GM12878 (cell line): ENCODE measurements at regions of chr2 and their contacts with region 1.

Region 1: DNA sequence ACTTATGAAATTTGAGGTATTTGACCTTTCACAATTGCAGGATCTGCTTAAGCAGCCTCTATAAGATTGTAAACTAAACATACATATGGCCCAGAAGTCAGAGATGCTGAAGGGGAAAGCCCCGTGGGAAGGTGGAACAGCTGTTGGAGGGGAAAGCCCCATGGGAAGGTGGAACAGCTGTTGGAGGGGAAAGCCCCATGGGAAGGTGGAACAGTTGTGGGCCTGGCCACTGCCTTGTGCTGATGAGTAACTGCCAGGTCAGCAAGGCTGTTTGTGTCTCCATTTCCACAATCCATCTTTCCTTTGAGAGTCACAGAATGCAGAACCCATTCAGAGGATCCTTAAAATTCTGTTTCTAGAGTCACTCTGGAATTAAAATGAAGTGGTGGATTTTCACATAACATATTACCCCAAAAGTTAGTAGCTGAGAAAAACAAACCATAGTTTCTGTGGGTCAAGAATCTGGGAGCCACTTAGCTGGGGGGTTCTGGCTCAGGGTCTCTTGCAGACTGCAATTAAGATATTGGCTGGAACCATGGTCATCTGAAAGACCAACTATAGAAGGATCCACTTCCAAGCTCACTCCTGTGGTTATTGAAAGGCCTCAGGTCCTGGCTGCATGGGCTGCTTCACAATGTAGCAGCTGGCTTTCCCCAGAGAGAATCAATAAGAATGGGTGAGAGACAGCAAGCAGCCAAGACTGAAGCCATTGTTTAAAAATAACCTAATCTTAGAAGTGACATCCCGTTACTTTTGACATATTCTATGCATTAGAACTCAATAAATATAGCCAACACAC is 86.6 kb upstream of the CAVIN2 start:
- DNase-seq: peak; percentile 40
- ATAC-seq: peak; percentile 88
- H3K4me3 ChIP-seq: no peak overlapping the region
- H3K27ac ChIP-seq: no peak overlapping the region; the same call in 1 of the 2 replicates
- H3K4me1 ChIP-seq: peaks cover 16% of the 10 kb centered on the region
- H3K27me3 ChIP-seq: no peaks in the 10 kb centered on the region
- CTCF ChIP-seq: no peak
- EP300 ChIP-seq: no peak
- POLR2A ChIP-seq: no peak
- RAD21 ChIP-seq: no peak

Region 2: GRCh38 chr2:191912764-191913163 is 20.7 kb before region 1 on chr2:
- CTCF ChIA-PET with region 1: interaction called, 3 read pairs
- POLR2A ChIA-PET with region 1: no interaction called
- RAD21 ChIA-PET with region 1: interaction called, 4 read pairs
- SMC1A ChIA-PET with region 1: interaction called, 21 read pairs
- in situ Hi-C with region 1: no loop called
- intact Hi-C with region 1: no loop called
- DNase-seq: no peak
- ATAC-seq: no peak
- H3K4me3 ChIP-seq: no peak overlapping the region
- H3K27ac ChIP-seq: no peak overlapping the region
- H3K4me1 ChIP-seq: no peaks in the 10 kb centered on the region
- H3K27me3 ChIP-seq: peaks cover 0 to 4% of the 10 kb centered on the region in 2 experiments; a peak in 1 of 4 replicates
- CTCF ChIP-seq: no peak
- EP300 ChIP-seq: no peak
- POLR2A ChIP-seq: no peak
- RAD21 ChIP-seq: no peak

Region 3: GRCh38 chr2:191950132-191950874 is 16.8 kb after region 1 on chr2:
- CTCF ChIA-PET with region 1: interaction called, 5 read pairs
- POLR2A ChIA-PET with region 1: interaction called, 3 read pairs
- RAD21 ChIA-PET with region 1: no interaction called
- SMC1A ChIA-PET with region 1: interaction called, 10 read pairs
- in situ Hi-C with region 1: no loop called
- intact Hi-C with region 1: no loop called
- DNase-seq: no peak
- ATAC-seq: peak; percentile 59; the same call in 2 of the 3 replicates
- H3K4me3 ChIP-seq: no peak overlapping the region
- H3K27ac ChIP-seq: no peak overlapping the region
- H3K4me1 ChIP-seq: no peaks in the 10 kb centered on the region
- H3K27me3 ChIP-seq: no peaks in the 10 kb centered on the region
- CTCF ChIP-seq: no peak
- EP300 ChIP-seq: no peak
- POLR2A ChIP-seq: no peak
- RAD21 ChIP-seq: no peak

Region 4: DNA sequence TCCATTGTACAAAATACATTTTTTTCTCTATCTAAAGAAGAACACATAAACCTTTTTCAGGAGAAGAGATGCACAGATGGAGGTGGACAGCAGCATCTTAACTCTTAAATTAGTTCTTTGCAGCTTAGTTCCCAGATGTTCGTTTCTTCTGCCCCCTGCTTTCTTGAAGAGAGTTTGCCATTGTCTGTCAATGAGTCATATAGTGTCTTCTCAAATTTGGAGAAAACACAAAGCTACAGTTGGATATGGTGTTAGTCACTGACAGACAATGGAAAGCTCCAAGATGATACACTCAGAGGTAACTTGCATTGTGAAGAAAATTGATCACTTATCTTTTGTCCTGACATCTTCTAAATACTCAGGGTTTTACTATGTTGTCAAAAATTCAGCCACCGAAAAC is 310.0 kb after region 1 on chr2:
- CTCF ChIA-PET with region 1: no interaction called
- POLR2A ChIA-PET with region 1: no interaction called
- RAD21 ChIA-PET with region 1: no interaction called
- SMC1A ChIA-PET with region 1: no interaction called
- in situ Hi-C with region 1: no loop called
- intact Hi-C with region 1: no loop called
- DNase-seq: no peak
- ATAC-seq: no peak
- H3K4me3 ChIP-seq: no peak overlapping the region
- H3K27ac ChIP-seq: no peak overlapping the region
- H3K4me1 ChIP-seq: no peaks in the 10 kb centered on the region
- H3K27me3 ChIP-seq: no peaks in the 10 kb centered on the region
- CTCF ChIP-seq: no peak
- EP300 ChIP-seq: no peak
- POLR2A ChIP-seq: no peak
- RAD21 ChIP-seq: no peak